ENCODE measurements at regions of chr19 and their contacts with region 1.

Region 1: DNA sequence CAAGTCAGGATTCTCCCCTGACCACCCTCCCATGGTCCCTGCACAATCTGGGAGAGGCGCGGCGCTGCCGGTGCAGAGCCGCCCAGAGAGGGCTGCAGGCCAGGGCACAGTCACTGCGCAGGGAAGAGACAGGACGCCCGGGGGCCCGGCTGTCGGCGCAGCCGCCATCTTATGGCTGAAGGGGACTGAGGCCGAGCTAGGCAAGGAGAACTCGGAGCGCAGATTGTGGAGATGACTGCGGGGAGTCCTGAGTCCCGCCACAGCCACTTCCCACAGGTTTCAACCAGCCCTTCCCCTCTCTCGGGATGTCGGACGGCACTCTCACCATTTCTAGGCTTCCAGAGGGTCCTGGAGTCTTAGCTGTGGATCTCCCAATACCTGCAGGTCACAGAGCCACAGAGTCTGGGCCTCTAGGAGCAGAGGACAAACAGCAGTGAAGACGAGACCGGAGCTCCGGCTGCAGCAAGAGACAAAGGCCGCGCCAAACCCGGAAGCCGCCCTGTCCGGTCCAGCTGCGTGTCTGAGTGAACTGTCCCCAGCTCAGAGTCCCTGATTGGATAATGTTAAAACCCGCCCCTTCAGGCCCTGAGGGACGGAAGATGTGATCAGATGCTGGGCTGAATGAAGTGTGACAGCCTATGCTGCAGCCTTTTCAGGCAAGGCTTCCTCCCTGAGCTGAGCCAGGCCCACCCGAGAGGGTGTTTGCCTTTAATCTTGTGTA is at the start of gene ZNF708:
- DNase-seq: peak; percentile 94
- ATAC-seq: peak; percentile 100
- H3K4me3 ChIP-seq: peak within 1 kb of the TSS; percentile 84 to 96 (median 95)
- H3K27ac ChIP-seq: peak within 1 kb of the TSS; percentile 97
- H3K4me1 ChIP-seq: peaks cover 12% of the 10 kb centered on the region
- H3K27me3 ChIP-seq: no peaks in the 10 kb centered on the region; a peak in 1 of 5 replicates
- CTCF ChIP-seq: no peak
- EP300 ChIP-seq: no peak
- POLR2A ChIP-seq: peak; percentile 84 to 96
- RAD21 ChIP-seq: no peak
- total RNA-seq, gene ZNF708: 5.2 and 6.9 TPM in 2 replicates

Region 2: DNA sequence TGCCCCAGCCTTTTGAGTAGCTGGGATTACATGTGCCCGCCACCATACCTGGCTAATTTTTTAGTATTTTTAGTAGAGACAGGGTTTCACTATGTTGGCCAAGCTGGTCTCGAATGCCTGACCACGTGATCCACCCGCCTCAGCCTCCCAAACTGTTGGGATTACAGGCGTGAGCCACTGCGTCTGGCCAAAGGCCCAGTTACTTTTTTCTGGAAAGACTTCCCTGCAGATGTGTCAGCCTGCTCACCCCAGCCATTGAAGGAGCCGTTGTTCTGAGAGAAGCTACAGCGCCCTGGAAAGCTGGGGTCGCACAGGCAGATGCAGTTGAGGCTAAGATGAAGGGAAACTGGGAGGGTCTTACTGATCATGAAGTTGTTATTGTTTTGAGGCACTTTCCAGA is 659.8 kb before region 1 on chr19:
- CTCF ChIA-PET with region 1: no interaction called
- POLR2A ChIA-PET with region 1: no interaction called
- in situ Hi-C with region 1: no loop called
- intact Hi-C with region 1: no loop called
- DNase-seq: no peak
- ATAC-seq: no peak
- H3K4me3 ChIP-seq: no peak overlapping the region
- H3K27ac ChIP-seq: no peak overlapping the region
- H3K4me1 ChIP-seq: peaks cover 13% of the 10 kb centered on the region
- H3K27me3 ChIP-seq: no peaks in the 10 kb centered on the region
- CTCF ChIP-seq: no peak
- EP300 ChIP-seq: no peak
- POLR2A ChIP-seq: no peak
- RAD21 ChIP-seq: no peak

Region 3: DNA sequence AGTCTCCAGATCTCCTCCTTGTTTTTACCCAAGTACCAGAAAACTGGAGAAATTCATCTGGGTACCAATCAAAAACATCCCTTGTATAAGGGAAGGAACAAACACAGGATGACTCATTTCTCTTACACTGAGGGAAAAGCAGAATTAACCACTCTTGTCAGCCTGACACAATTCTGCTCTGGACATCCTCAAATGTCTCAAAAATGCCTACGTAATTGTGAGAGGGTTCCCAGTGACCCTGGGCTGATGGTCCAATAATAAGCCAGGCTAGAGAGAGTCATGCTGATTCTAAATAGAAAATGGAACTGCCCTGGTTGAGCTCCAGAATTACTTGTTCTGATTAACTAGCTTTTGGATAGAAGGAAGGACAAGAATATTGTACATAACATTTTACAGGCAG is 14.4 kb before region 1 on chr19:
- CTCF ChIA-PET with region 1: no interaction called
- POLR2A ChIA-PET with region 1: interaction called, 17 read pairs
- in situ Hi-C with region 1: no loop called
- intact Hi-C with region 1: no loop called
- DNase-seq: no peak
- ATAC-seq: no peak
- H3K4me3 ChIP-seq: no peak overlapping the region
- H3K27ac ChIP-seq: no peak overlapping the region
- H3K4me1 ChIP-seq: peaks cover 14% of the 10 kb centered on the region
- H3K27me3 ChIP-seq: no peaks in the 10 kb centered on the region
- CTCF ChIP-seq: no peak
- EP300 ChIP-seq: no peak
- POLR2A ChIP-seq: no peak
- RAD21 ChIP-seq: no peak

Region 4: GRCh38 chr19:21358768-21359451 is 29.9 kb after region 1 on chr19 and contains the start of gene ZNF738:
- CTCF ChIA-PET with region 1: no interaction called
- POLR2A ChIA-PET with region 1: interaction called, 17 read pairs
- in situ Hi-C with region 1: no loop called
- intact Hi-C with region 1: loop called (anchors 1 kb)
- DNase-seq: peak; percentile 84
- ATAC-seq: peak; percentile 98
- H3K4me3 ChIP-seq: peak within 1 kb of the TSS; percentile 71 to 74 (median 73)
- H3K27ac ChIP-seq: peak within 1 kb of the TSS; percentile 75
- H3K4me1 ChIP-seq: no peaks in the 10 kb centered on the region
- H3K27me3 ChIP-seq: no peaks in the 10 kb centered on the region; a peak in 1 of 5 replicates
- CTCF ChIP-seq: no peak
- EP300 ChIP-seq: no peak
- POLR2A ChIP-seq: peak; percentile 51 to 53; a peak in 3 of 4 replicates
- RAD21 ChIP-seq: no peak
- total RNA-seq, gene ZNF738: 4.4 and 5.3 TPM in 2 replicates

Region 5: GRCh38 chr19:21396893-21397572 is 68.0 kb after region 1 on chr19 and contains the start of gene ZNF493:
- CTCF ChIA-PET with region 1: no interaction called
- POLR2A ChIA-PET with region 1: interaction called, 21 read pairs
- in situ Hi-C with region 1: no loop called
- intact Hi-C with region 1: loop called (anchors 5 kb)
- DNase-seq: peak; percentile 95
- ATAC-seq: peak; percentile 100
- H3K4me3 ChIP-seq: peak within 1 kb of the TSS; percentile 69 to 99 (median 87)
- H3K27ac ChIP-seq: peak within 1 kb of the TSS; percentile 73
- H3K4me1 ChIP-seq: peaks cover 10% of the 10 kb centered on the region
- H3K27me3 ChIP-seq: no peaks in the 10 kb centered on the region; a peak in 1 of 5 replicates
- CTCF ChIP-seq: no peak
- EP300 ChIP-seq: no peak
- POLR2A ChIP-seq: peak; percentile 81 to 87
- RAD21 ChIP-seq: no peak
- total RNA-seq, gene ZNF493: 4.1 and 9.0 TPM in 2 replicates

Region 6: DNA sequence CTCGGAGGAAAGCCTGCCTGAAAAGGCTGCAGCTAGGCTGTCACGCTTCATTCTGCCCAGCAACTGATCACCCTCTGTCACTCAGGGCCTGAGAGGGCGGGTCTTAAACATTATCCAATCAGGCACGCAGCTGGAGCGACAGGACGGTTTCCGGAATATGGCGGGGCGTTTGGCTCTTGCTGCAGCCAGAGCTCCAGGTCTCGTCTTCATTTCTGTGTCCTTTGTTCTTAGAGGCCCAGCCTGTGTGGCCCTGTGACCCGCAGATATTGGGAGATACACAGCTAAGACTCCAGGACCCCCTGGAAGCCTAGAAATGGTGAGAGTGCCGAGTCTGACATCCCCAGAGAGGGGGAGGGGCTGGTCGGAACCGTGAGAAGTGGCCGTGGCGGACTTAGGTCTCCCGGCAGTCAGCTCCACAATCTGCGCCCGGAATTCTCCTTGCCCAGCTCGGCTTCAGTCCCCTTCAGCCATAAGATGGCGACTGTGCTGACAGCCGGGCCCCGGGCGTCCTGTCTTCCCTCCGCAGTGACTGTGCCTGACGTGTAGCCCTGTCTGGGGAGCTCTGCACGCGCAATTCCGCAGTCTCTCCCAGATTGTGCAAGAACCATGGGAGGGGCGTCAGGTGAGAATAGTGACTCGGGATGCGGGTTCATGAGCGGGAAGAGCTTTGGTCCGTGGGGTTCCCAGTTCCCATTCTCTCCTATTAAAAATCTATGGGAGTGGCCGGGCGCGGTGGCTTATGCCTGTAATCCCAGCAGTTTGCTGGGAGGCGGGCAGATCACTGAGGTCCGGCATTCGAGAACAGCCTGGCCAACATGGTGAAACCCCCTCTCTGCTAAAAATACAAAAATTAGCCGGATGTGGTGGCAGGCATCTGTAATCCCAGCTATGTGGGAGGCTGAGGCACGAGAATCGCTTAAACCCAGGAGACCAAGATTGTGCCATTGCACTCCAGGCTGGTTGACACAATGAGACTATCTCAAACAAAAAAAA is 176.7 kb after region 1 on chr19 and contains the start of gene ZNF429:
- CTCF ChIA-PET with region 1: no interaction called
- POLR2A ChIA-PET with region 1: interaction called, 14 read pairs
- in situ Hi-C with region 1: no loop called
- intact Hi-C with region 1: no loop called
- DNase-seq: peak; percentile 87
- ATAC-seq: peak; percentile 99
- H3K4me3 ChIP-seq: peak within 1 kb of the TSS; percentile 64 to 80 (median 78)
- H3K27ac ChIP-seq: peak within 1 kb of the TSS; percentile 85
- H3K4me1 ChIP-seq: no peaks in the 10 kb centered on the region
- H3K27me3 ChIP-seq: no peaks in the 10 kb centered on the region; a peak in 1 of 5 replicates
- CTCF ChIP-seq: peak; percentile 33
- EP300 ChIP-seq: peak in 1 of 2 experiments; percentile 23; a peak in 1 of 4 replicates
- POLR2A ChIP-seq: peak; percentile 65 to 74; a peak in 3 of 4 replicates
- RAD21 ChIP-seq: no peak
- total RNA-seq, gene ZNF429: 3.3 and 5.9 TPM in 2 replicates

Region 7: GRCh38 chr19:21767065-21767800 is 438.2 kb after region 1 on chr19 and contains the start of gene ZNF100:
- CTCF ChIA-PET with region 1: no interaction called
- POLR2A ChIA-PET with region 1: interaction called, 5 read pairs
- in situ Hi-C with region 1: no loop called
- intact Hi-C with region 1: loop called (anchors 10 kb)
- DNase-seq: peak; percentile 94
- ATAC-seq: peak; percentile 98
- H3K4me3 ChIP-seq: peak within 1 kb of the TSS; percentile 80 to 99 (median 90)
- H3K27ac ChIP-seq: peak within 1 kb of the TSS; percentile 88
- H3K4me1 ChIP-seq: peaks cover 18% of the 10 kb centered on the region
- H3K27me3 ChIP-seq: no peaks in the 10 kb centered on the region
- CTCF ChIP-seq: peak; percentile 23; the same call in 1 of the 2 replicates
- EP300 ChIP-seq: no peak
- POLR2A ChIP-seq: peak; percentile 70 to 85
- RAD21 ChIP-seq: no peak
- total RNA-seq, gene ZNF100: 11.4 and 16.1 TPM in 2 replicates

Measured in HepG2 (cell line).